ENCODE measurements at regions of chr7 and their contacts with region 1.

Region 1: DNA sequence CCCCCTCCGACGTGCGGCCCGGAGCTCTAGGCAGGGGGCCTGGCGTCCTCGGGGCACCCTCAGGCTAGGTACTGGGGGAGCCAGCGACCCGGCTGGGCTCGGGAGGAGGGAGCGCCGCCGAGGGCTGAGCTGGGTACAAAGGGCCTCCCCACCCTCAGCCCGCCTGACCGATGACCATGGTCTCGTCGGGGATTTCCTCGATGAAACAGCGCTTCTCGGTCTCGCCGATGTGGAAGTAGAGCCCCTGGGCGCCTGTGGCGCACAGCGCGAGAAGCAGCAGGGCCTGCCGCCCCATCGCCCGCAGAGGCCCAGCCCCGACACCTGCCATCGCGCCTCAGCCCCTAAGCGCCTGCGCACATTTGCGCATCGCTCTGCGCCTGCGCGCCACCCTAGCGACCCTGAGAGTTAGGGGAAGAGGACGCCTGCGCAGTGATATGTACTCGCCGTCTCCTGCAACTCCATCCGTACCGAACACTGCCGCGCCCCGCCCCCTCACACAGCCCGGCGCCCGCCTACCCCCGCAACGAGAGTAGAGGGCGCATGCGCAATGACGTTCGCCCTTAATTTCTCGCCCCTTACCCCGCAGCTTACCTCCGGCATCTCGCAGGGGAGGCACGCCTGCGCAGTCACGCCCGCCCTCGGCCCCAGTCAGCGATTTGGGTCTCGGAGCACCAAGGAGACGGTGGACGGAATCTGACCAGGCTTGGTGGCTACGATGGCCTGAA is at the start of gene TMED4:
- DNase-seq: peak; percentile 100
- ATAC-seq: peak; percentile 98 to 99
- H3K4me3 ChIP-seq: peak within 1 kb of the TSS; percentile 65
- H3K27ac ChIP-seq: peak within 1 kb of the TSS; percentile 94
- H3K4me1 ChIP-seq: peaks cover 2% of the 10 kb centered on the region
- H3K27me3 ChIP-seq: no peaks in the 10 kb centered on the region
- total RNA-seq, gene TMED4: 63.2 to 75.2 (median 66.6) TPM

Region 2: GRCh38 chr7:44750921-44751571 is 169.0 kb after region 1 on chr7:
- intact Hi-C with region 1: loop called in 1 of 4 experiments (anchors 10 kb)
- DNase-seq: peak in 1 of 3 donors; percentile 62
- ATAC-seq: no peak
- H3K4me3 ChIP-seq: no peak overlapping the region
- H3K27ac ChIP-seq: no peak overlapping the region
- H3K4me1 ChIP-seq: peaks cover 31% of the 10 kb centered on the region
- H3K27me3 ChIP-seq: no peaks in the 10 kb centered on the region

Measured in right cardiac atrium (tissue), 5 donors.